Activated CD4-positive, alpha-beta T cell treated with anti-CD3 and anti-CD28 coated beads, Interleukin-2, amount 10 ng/mL, durations not matched to agents 7 days and 5 days (primary cell): ENCODE measurements at regions of chr5 and their contacts with region 1.

Region 1: DNA sequence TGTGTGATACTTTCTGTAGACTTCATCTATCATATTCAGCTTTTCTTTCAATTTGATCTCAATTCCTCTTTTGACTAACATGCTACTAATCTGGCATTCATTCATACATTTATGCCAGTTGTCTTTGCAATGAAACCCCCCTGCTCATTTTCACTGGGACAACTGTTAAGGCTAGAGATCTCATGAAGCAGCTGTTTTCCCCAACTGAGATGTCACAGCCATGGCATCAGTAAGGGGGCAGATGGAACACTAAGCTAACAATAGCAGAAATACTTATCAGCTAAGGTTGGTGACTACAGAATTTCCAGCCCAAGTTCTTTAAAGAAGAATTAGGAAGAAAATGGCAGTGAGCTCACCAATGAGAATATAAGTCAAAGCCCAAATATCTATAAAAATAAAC is 9.4 kb downstream of the TMED7 start:
- DNase-seq: no peak
- H3K4me3 Mint-ChIP-seq: no peak overlapping the region
- H3K27ac Mint-ChIP-seq: no peak overlapping the region
- H3K4me1 Mint-ChIP-seq: peaks cover 9% of the 10 kb centered on the region
- H3K27me3 Mint-ChIP-seq: no peaks in the 10 kb centered on the region

Region 2: GRCh38 chr5:115601701-115602590 is 14.5 kb before region 1 on chr5 and contains the start of gene TICAM2:
- CTCF ChIA-PET with region 1: interaction called, 11 read pairs
- POLR2A ChIA-PET with region 1: no interaction called
- DNase-seq: peak; percentile 54
- H3K4me3 Mint-ChIP-seq: peak within 1 kb of the TSS; percentile 67
- H3K27ac Mint-ChIP-seq: peak within 1 kb of the TSS; percentile 75
- H3K4me1 Mint-ChIP-seq: peaks cover 24% of the 10 kb centered on the region
- H3K27me3 Mint-ChIP-seq: no peaks in the 10 kb centered on the region
- total RNA-seq, gene TICAM2: 1.1 to 1.4 TPM